ENCODE measurements at regions of chr10 and their contacts with region 1.

Region 1: GRCh38 chr10:14093730-14094484 is 236.8 kb downstream of the FRMD4A start:
- DNase-seq: peak in 1 of 9 experiments; percentile 15
- ATAC-seq: no peak
- H3K4me3 ChIP-seq: no peak overlapping the region
- H3K4me3 Mint-ChIP-seq: no peak overlapping the region
- H3K27ac ChIP-seq: no peak overlapping the region
- H3K27ac Mint-ChIP-seq: no peak overlapping the region
- H3K4me1 ChIP-seq: no peaks in the 10 kb centered on the region
- H3K4me1 Mint-ChIP-seq: no peaks in the 10 kb centered on the region
- H3K27me3 ChIP-seq: no peaks in the 10 kb centered on the region
- H3K27me3 Mint-ChIP-seq: no peaks in the 10 kb centered on the region
- CTCF ChIP-seq: peak; percentile 25

Region 2: DNA sequence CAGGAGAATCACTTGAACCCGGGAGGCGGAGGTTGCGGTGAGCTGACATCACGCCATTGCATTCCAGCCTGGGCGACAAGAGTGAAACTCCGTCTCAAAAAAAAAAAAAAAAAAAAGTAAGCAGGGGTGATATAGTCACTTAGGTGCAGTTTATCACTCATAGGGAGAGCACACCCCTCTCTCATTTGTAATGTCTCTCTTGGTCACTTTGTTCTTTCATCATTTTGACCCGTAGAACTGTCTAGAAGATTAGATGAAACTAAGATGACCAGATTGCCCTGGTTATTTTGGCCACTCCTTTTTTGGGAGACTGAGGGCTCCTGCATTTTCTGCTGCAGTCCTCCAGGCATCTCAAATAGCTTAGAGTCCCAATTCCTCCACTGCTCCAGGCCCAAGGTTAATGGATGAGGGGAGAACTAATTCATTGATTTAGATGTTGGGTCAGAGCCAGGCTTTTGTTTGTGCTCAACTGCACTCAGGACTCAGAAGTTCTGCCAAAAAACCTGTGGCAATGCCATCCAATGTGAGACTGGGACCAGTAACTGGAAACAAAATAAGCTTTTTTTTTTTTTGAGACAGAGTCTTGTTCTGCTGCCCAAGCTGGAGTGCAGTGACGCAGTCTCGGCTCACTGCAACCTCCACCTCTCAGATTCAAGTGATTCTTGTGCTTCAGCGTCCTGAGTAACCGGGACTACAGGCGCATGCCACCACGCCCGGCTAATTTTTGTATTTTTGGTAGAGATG is 1794.5 kb before region 1 on chr10:
- CTCF ChIA-PET with region 1: no interaction called
- POLR2A ChIA-PET with region 1: no interaction called
- intact Hi-C with region 1: no loop called
- DNase-seq: no peak
- ATAC-seq: no peak
- H3K4me3 ChIP-seq: no peak overlapping the region
- H3K4me3 Mint-ChIP-seq: no peak overlapping the region
- H3K27ac ChIP-seq: no peak overlapping the region
- H3K27ac Mint-ChIP-seq: no peak overlapping the region
- H3K4me1 ChIP-seq: no peaks in the 10 kb centered on the region
- H3K4me1 Mint-ChIP-seq: no peaks in the 10 kb centered on the region
- H3K27me3 ChIP-seq: no peaks in the 10 kb centered on the region
- H3K27me3 Mint-ChIP-seq: no peaks in the 10 kb centered on the region
- CTCF ChIP-seq: no peak

Region 3: DNA sequence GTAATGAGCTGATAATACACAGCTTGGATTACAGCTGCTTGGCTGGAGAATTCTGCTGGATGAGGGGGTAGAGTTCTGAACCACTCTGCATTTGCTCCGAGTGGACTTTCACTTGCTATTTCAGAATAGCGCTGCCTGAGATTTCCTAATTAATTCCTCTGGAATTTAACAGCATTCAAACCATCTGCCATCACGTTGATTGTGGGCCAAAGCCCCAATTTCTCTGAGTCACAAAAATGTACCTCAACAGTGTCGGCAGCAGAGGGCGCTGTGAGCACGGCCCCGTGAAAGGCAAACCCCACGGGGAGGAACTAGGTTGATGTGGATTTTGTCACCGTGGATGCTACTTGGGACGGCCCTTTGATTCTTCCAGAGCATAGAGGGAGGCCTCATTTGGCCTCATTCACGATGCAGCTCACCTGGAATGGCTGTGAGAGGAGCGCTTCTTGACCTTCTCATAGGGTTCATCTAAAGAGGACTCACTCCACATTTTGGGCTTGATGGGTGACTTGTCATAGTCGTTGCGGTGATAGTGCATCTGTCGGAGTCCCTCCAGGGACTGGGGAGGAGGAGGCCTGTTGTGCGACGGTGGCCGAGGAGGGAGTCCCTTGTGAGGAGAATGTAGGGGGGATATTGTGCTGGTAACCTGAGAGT is 433.9 kb before region 1 on chr10:
- CTCF ChIA-PET with region 1: interaction called, 4 read pairs
- POLR2A ChIA-PET with region 1: no interaction called
- intact Hi-C with region 1: loop called (anchors 2 to 5 kb)
- DNase-seq: peak; percentile 43 to 77 (median 69)
- ATAC-seq: peak; percentile 79
- H3K4me3 ChIP-seq: no peak overlapping the region
- H3K4me3 Mint-ChIP-seq: peak overlapping the region; percentile 4
- H3K27ac ChIP-seq: no peak overlapping the region
- H3K27ac Mint-ChIP-seq: no peak overlapping the region
- H3K4me1 ChIP-seq: peaks cover 16% of the 10 kb centered on the region
- H3K4me1 Mint-ChIP-seq: peaks cover 24% of the 10 kb centered on the region
- H3K27me3 ChIP-seq: no peaks in the 10 kb centered on the region
- H3K27me3 Mint-ChIP-seq: no peaks in the 10 kb centered on the region
- CTCF ChIP-seq: peak; percentile 94

Region 4: DNA sequence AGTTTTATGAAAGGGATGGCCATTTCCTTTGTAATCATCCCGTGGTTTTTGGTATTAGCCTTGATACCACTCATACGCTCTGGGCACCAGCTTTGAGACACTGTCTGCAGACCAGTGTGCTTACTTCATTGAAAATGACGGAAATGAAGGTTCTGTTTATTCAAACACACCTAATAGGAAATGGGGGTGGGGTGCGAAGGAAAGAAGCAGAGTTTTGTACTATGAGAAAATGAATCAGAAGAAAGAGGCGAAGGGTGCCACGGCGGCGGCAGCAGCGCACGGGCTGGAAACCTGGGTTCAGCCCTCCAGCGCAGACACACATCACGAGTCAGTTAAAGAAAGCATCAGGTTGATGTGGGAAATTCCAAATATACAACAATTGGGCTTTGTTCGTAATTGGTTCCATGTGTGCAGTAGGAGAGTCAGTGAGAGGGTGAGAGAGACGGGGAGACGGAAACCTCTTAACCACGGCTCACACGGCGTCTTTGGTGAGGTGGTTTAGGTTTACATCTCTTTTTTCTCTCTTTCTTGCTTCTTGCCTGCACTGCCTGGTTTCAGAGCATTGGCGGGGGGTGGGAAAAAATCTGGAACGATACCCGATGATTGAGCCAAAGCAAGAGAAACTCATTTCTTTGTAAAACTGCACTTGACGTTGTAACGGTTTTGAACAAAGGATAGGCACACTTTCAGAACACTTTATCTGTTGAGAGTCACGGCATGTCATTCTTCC is 84.4 kb before region 1 on chr10:
- CTCF ChIA-PET with region 1: no interaction called
- POLR2A ChIA-PET with region 1: no interaction called
- intact Hi-C with region 1: loop called in 1 of 2 experiments (anchors 10 kb)
- DNase-seq: peak; percentile 27 to 92 (median 61)
- ATAC-seq: peak; percentile 84
- H3K4me3 ChIP-seq: peak overlapping the region; percentile 37 to 42
- H3K4me3 Mint-ChIP-seq: peak overlapping the region; percentile 84
- H3K27ac ChIP-seq: peak overlapping the region; percentile 23 to 34
- H3K27ac Mint-ChIP-seq: peak overlapping the region; percentile 91
- H3K4me1 ChIP-seq: peaks cover 33% of the 10 kb centered on the region
- H3K4me1 Mint-ChIP-seq: peaks cover 44% of the 10 kb centered on the region
- H3K27me3 ChIP-seq: no peaks in the 10 kb centered on the region
- H3K27me3 Mint-ChIP-seq: no peaks in the 10 kb centered on the region
- CTCF ChIP-seq: no peak

Region 5: GRCh38 chr10:14282276-14282675 is 188.4 kb after region 1 on chr10:
- CTCF ChIA-PET with region 1: no interaction called
- POLR2A ChIA-PET with region 1: no interaction called
- intact Hi-C with region 1: no loop called
- DNase-seq: no peak
- ATAC-seq: no peak
- H3K4me3 ChIP-seq: no peak overlapping the region
- H3K4me3 Mint-ChIP-seq: no peak overlapping the region
- H3K27ac ChIP-seq: no peak overlapping the region
- H3K27ac Mint-ChIP-seq: no peak overlapping the region
- H3K4me1 ChIP-seq: no peaks in the 10 kb centered on the region
- H3K4me1 Mint-ChIP-seq: no peaks in the 10 kb centered on the region
- H3K27me3 ChIP-seq: peaks cover 0 to 2% of the 10 kb centered on the region in 2 experiments
- H3K27me3 Mint-ChIP-seq: peaks cover 29% of the 10 kb centered on the region
- CTCF ChIP-seq: no peak

Measured in CD8-positive, alpha-beta T cell (primary cell).